Activated B cell treated with CpG ODN at 0.5 μM for 24 hours (primary cell): ENCODE measurements at regions of chr2 and their contacts with region 1.

Region 1: DNA sequence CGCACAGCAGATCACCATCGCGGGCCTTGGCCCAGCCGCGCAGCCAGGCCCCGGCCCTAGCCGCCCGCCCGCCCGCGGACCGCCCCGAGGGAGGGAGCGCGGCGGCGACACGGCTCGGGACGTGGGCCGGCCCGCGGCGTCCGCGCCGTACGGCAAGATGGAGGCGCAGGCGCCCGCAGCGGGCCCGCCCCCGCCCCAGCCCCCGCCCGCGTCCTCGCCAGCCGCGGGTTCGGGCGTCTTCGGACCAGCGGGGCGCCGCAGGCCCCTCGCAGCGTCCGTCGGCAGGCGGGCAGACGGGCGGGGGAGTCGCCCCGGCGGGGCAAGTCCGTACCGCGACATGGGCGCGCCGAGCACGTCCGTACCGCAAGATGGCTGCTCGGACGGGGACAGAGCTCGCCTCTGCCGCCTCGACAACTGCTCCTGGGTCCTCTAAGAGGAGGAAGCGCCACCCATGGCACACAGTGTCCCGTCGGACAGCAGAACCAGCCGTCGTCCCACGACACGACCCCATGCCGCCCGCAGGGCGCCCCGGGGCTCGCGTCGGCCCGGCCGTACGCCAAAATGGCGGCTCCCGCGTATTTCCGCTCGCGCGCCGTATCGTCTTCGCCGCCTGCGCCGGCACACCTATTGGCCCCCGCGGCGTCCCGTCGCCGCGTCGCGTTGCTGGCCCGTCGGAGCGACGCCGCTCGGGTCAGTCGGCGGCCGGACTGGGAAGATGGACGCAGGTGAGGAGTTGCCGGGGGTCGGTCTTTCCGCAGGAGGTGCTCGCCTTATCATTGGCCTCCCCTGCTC is at the starts of genes ATG4B and THAP4:
- DNase-seq: peak; percentile 84
- ATAC-seq: peak; percentile 72
- H3K4me3 Mint-ChIP-seq: peak within 1 kb of the TSS; percentile 91
- H3K27ac Mint-ChIP-seq: peak within 1 kb of the TSS; percentile 83
- H3K4me1 Mint-ChIP-seq: peaks cover 45% of the 10 kb centered on the region
- H3K27me3 Mint-ChIP-seq: no peaks in the 10 kb centered on the region
- CTCF ChIP-seq: no peak
- total RNA-seq, gene ATG4B: 92.6 and 101 TPM in 2 replicates
- total RNA-seq, gene THAP4: 23.7 and 26.7 TPM in 2 replicates

Region 2: DNA sequence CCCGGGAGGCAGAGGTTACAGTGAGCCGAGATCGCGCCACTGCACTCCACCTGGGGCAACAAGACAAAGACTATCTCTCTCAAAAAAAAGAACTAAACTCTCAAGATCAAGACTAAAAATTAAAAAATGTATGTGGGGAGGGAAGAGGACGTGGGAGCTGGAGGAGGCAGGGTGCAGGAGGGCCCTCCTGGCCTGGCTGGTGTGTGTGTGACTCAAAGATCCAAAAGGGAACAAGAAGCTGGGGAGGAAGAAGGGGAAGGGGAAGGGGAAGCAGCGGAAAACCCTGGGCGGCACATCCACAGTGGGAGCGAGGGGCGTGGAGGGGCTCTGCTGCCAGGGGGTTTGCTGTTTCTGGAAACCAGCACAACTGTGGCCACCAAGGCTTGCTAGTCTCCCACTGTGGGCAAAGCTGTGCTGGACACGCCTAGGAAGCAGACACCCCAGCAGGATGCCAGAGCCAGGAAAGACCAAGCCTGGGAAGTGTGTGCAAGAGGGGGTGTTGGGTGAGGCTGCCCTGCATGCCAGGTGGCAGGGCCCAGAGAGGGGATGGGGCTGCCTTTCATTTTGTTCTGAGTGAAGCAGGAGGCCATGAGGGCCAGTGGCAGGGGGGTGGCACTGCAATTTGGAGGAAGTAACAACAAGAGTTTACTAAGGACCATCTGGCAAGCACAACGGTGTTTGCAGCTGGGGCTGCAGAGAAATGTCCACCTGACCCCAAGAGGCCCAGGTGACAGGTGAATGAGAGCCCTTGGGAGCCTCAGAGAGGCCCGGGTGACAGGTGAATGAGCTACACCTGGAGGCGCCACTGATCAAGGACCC is 404.3 kb before region 1 on chr2:
- CTCF ChIA-PET with region 1: no interaction called
- POLR2A ChIA-PET with region 1: no interaction called
- intact Hi-C with region 1: no loop called
- DNase-seq: no peak
- ATAC-seq: no peak
- H3K4me3 Mint-ChIP-seq: no peak overlapping the region
- H3K27ac Mint-ChIP-seq: no peak overlapping the region
- H3K4me1 Mint-ChIP-seq: no peaks in the 10 kb centered on the region
- H3K27me3 Mint-ChIP-seq: no peaks in the 10 kb centered on the region
- CTCF ChIP-seq: no peak

Region 3: DNA sequence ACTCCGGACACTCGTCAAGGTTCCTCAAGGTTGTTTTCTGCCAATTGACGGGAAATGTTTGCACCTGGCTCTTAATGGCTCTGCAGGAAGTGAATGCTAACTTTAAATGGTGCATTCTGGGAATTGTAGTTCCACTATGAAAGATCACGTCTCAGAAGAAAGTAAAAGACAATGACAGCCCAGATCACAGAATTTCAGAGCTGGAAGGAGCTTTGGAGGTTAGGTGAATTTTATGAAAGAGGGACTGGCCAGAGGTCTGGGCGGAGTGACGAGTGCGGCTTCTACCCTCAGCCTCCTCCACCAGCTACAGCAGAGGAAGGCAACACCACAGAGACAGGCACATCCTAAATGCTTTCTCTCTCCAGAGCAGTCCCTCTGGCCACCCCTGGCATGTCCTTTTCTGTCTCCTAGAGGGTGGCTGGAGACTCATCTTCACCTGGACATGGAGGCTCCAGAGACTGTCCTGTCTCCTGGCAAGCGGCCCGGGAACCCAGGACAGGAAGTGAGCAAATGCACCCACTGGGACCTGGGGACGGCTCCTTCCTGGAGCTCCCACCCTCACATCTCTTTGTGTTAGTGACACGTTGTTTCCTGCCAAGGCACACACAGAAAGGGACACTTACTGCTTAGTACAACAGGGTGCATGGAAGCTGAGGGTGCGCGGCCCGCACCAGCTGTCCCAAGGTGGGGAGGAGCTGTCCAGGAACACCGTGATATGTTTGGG is 19.6 kb before region 1 on chr2:
- CTCF ChIA-PET with region 1: no interaction called
- POLR2A ChIA-PET with region 1: interaction called, 3 read pairs
- intact Hi-C with region 1: loop called (anchors 1 kb)
- DNase-seq: peak; percentile 20
- ATAC-seq: peak; percentile 83
- H3K4me3 Mint-ChIP-seq: peak overlapping the region; percentile 92
- H3K27ac Mint-ChIP-seq: peak overlapping the region; percentile 86
- H3K4me1 Mint-ChIP-seq: peaks cover 24% of the 10 kb centered on the region
- H3K27me3 Mint-ChIP-seq: no peaks in the 10 kb centered on the region
- CTCF ChIP-seq: no peak

Region 4: GRCh38 chr2:241686649-241687425 is 49.6 kb after region 1 on chr2 and contains the start of gene DTYMK:
- CTCF ChIA-PET with region 1: no interaction called
- POLR2A ChIA-PET with region 1: interaction called, 4 read pairs
- intact Hi-C with region 1: loop called (anchors 1 kb)
- DNase-seq: peak; percentile 99
- ATAC-seq: peak; percentile 95
- H3K4me3 Mint-ChIP-seq: peak within 1 kb of the TSS; percentile 80
- H3K27ac Mint-ChIP-seq: peak within 1 kb of the TSS; percentile 87
- H3K4me1 Mint-ChIP-seq: peaks cover 28% of the 10 kb centered on the region
- H3K27me3 Mint-ChIP-seq: no peaks in the 10 kb centered on the region
- CTCF ChIP-seq: no peak
- total RNA-seq, gene DTYMK: 29.2 and 34.7 TPM in 2 replicates